ENCODE measurements at regions of chr3 and their contacts with region 1.

Region 1: GRCh38 chr3:186540221-186540834 is 3.9 kb downstream of the CRYGS start:
- DNase-seq: no peak
- H3K4me3 ChIP-seq: no peak overlapping the region
- H3K27ac ChIP-seq: no peak overlapping the region
- H3K4me1 ChIP-seq: no peaks in the 10 kb centered on the region
- H3K27me3 ChIP-seq: no peaks in the 10 kb centered on the region
- CTCF ChIP-seq: peak; percentile 23 to 75 (median 54)
- POLR2A ChIP-seq: no peak

Region 2: DNA sequence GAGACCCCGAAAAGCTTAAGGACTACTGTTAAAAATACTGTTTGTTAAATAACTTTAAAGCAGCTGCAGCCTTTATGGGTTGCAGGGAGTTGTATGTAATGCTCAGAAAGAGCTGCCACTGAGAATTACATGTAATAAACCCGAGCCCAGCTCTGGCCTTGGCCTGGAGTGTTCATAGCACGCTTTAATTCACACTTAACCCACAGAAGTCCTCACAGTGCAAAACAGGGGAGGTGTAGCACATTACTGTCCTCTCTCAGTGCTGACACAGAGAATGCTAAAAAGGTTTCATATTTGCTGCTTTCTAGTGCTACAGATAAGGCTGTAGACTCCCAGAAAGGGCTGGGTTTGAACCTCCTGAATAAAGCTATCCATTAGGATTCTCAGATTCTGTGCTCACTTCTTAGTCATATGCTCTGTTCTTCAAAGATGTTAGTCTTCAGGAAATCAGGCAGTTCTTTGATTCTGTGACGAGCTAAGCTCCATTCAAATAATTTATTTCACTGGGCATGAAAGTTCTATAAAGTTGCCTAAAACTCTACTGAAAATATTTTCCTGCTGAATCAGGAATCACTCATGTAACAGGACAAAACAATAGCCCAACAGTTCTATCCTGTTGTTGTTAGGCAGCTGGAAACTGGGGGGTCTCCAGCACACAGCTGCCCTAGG is 846.2 kb before region 1 on chr3:
- intact Hi-C with region 1: no loop called
- DNase-seq: no peak
- H3K4me3 ChIP-seq: no peak overlapping the region
- H3K27ac ChIP-seq: no peak overlapping the region
- H3K4me1 ChIP-seq: no peaks in the 10 kb centered on the region
- H3K27me3 ChIP-seq: no peaks in the 10 kb centered on the region
- CTCF ChIP-seq: no peak
- POLR2A ChIP-seq: no peak

Region 3: DNA sequence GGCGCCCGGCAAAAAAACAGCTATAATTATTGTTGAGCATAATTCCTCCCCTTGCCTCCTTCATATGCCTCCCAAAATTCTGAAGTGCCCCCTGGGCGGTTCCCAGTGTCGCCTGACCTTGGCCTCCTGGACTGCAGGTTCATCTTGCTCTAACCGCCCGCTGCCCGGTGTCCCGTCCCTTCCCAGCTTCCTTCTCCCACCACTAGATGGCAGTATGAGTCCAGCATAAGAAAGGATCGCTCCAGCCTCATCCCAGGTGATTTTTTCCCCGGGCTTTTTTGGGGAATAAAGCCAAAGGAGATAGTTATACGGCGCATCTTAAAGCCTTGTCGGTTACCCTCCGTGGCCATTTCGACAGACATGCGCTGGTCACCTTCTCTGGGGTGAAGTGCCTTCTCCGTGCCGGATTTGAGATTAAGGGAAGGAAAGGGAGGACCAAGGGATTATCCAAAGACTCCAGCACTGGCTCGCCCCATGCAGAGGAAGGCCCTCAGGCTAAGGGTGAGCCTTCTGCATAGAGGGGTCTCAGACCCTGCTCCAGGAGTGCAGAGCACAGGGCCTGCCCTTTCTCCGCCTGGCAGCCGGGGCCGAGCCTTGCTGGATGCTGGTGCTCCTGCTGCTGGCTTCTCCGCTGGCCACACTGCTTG is 556.7 kb before region 1 on chr3:
- intact Hi-C with region 1: loop called (anchors 5 kb)
- DNase-seq: no peak
- H3K4me3 ChIP-seq: no peak overlapping the region
- H3K27ac ChIP-seq: no peak overlapping the region
- H3K4me1 ChIP-seq: no peaks in the 10 kb centered on the region
- H3K27me3 ChIP-seq: no peaks in the 10 kb centered on the region
- CTCF ChIP-seq: peak; percentile 90
- POLR2A ChIP-seq: no peak

Region 4: DNA sequence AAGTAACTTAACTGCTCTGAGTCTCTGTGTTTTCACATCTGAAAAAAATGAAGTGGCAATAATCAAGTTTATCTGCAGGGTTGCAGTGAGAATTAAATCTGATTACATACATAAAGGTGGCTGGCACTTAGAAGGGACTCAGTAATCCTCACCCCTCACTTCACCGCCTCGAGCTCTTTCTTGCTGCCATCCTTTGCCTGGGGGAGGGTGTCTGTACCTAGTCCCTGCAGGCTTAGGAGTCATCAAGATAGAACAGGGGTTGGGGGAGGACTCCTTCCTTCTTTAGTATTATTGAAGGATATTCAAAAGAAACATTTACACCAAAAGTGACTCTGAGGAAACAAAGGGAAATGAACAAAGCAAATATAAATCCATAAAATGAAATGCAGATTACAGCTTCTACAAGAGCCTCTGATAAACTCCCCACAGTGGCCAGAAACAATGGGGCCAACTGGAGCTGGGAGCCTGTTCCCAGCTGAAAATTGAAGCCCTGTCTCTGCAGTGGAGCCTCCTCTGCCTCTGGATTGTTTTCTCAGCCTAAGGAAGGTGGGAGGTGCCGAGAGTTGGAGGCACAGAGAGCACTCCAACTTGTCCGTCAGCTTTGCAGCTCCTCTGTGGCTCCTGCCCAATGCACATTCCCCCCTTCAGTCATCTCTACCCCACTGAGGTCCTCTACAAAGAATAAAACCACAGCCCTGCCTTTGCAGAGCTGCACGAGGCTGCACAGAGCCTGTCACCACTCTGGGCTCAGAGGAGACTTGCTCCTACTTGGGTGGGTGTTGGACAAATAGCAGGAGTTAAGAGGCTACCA is 38.0 kb before region 1 on chr3:
- intact Hi-C with region 1: no loop called
- DNase-seq: peak; percentile 54 to 55
- H3K4me3 ChIP-seq: no peak overlapping the region
- H3K27ac ChIP-seq: no peak overlapping the region
- H3K4me1 ChIP-seq: no peaks in the 10 kb centered on the region
- H3K27me3 ChIP-seq: no peaks in the 10 kb centered on the region
- CTCF ChIP-seq: no peak
- POLR2A ChIP-seq: no peak

Region 5: GRCh38 chr3:186871403-186871924 is 331.1 kb after region 1 on chr3:
- intact Hi-C with region 1: no loop called
- DNase-seq: no peak
- H3K4me3 ChIP-seq: no peak overlapping the region
- H3K27ac ChIP-seq: no peak overlapping the region
- H3K4me1 ChIP-seq: no peaks in the 10 kb centered on the region
- H3K27me3 ChIP-seq: no peaks in the 10 kb centered on the region
- CTCF ChIP-seq: no peak
- POLR2A ChIP-seq: no peak